ENCODE measurements at regions of chr4 and their contacts with region 1.

Region 1: GRCh38 chr4:115548123-115548522 is 434.7 kb upstream of the NDST4 start:
- DNase-seq: no peak
- ATAC-seq: no peak
- H3K4me3 ChIP-seq: no peak overlapping the region
- H3K27ac ChIP-seq: no peak overlapping the region
- H3K4me1 ChIP-seq: no peaks in the 10 kb centered on the region
- H3K27me3 ChIP-seq: no peaks in the 10 kb centered on the region

Region 2: DNA sequence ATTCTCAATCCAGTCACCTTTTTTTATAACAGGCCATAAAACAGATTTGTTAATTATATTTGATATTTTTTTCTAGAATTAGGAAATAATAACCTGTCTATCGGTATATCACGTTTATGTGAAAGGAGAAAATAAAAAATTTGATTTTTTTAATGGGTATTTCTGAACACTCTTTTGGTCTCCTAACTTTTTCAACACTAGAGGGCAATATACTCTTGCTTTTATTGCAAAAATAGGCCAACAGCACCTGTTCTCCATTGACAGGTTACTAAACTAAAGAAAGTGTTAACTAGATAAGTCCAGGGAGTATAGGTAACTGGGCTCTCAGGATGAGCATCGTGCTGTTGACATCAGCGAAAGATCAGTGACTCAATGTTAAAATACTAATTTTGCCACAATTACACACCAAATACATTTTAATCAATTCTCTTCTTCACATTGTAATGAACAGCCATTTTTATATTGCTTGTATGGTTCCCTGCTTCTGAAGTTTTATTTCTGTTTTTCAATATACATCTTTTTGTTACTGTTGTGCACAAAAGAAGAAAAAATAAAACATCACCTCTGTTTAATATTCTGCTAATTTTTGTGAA is 457.5 kb before region 1 on chr4:
- intact Hi-C with region 1: loop called in 1 of 2 experiments (anchors 10 kb)
- DNase-seq: no peak
- ATAC-seq: no peak
- H3K4me3 ChIP-seq: no peak overlapping the region
- H3K27ac ChIP-seq: no peak overlapping the region
- H3K4me1 ChIP-seq: no peaks in the 10 kb centered on the region
- H3K27me3 ChIP-seq: no peaks in the 10 kb centered on the region

Region 3: GRCh38 chr4:115355329-115355728 is 192.8 kb before region 1 on chr4:
- intact Hi-C with region 1: no loop called
- DNase-seq: peak in 1 of 2 donors; percentile 34
- ATAC-seq: peak; percentile 46
- H3K4me3 ChIP-seq: no peak overlapping the region
- H3K27ac ChIP-seq: no peak overlapping the region
- H3K4me1 ChIP-seq: no peaks in the 10 kb centered on the region
- H3K27me3 ChIP-seq: no peaks in the 10 kb centered on the region